ENCODE measurements at regions of chr20 and their contacts with region 1.

Region 1: DNA sequence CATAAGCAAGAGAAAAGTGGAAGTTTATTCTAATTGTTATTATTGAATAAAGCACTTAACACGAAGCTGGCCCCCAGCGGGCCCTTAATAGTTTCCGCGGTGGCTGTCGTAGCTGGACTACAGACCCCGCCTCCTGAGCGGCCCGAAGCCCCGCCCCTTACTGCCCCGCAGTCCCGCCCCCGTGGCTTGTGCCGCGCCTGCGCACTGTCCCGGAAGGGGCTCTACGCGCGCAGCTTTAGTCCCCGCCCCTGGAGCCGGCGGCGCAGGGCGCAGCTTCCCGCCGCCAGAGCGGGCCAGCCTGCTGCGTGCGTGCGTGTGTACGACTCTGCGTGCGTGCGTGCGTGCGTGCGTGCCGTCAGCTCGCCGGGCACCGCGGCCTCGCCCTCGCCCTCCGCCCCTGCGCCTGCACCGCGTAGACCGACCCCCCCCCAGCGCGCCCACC is at the start of gene VAPB:
- DNase-seq: peak; percentile 93 to 99 (median 96)
- ATAC-seq: peak; percentile 95
- H3K4me3 ChIP-seq: peak within 1 kb of the TSS; percentile 81
- H3K4me3 Mint-ChIP-seq: peak within 1 kb of the TSS; percentile 96
- H3K27ac ChIP-seq: peak within 1 kb of the TSS; percentile 94 to 98
- H3K27ac Mint-ChIP-seq: peak within 1 kb of the TSS; percentile 92
- H3K4me1 ChIP-seq: peaks cover 31% of the 10 kb centered on the region
- H3K4me1 Mint-ChIP-seq: peaks cover 43% of the 10 kb centered on the region
- H3K27me3 ChIP-seq: peaks cover 0 to 4% of the 10 kb centered on the region in 2 experiments
- H3K27me3 Mint-ChIP-seq: no peaks in the 10 kb centered on the region
- CTCF ChIP-seq: no peak
- total RNA-seq, gene VAPB: 25.2 to 29.4 TPM

Region 2: GRCh38 chr20:56392282-56393137 is 1996.4 kb before region 1 on chr20 and contains the start of gene CSTF1:
- CTCF ChIA-PET with region 1: no interaction called
- POLR2A ChIA-PET with region 1: no interaction called
- intact Hi-C with region 1: loop called in 1 of 2 experiments (anchors 10 kb)
- DNase-seq: peak; percentile 98 to 100 (median 99)
- ATAC-seq: peak; percentile 83
- H3K4me3 ChIP-seq: peak within 1 kb of the TSS; percentile 88
- H3K4me3 Mint-ChIP-seq: no peak within 1 kb of the TSS
- H3K27ac ChIP-seq: peak within 1 kb of the TSS; percentile 89 to 93
- H3K27ac Mint-ChIP-seq: no peak within 1 kb of the TSS
- H3K4me1 ChIP-seq: peaks cover 24% of the 10 kb centered on the region
- H3K4me1 Mint-ChIP-seq: peaks cover 28% of the 10 kb centered on the region
- H3K27me3 ChIP-seq: no peaks in the 10 kb centered on the region
- H3K27me3 Mint-ChIP-seq: no peaks in the 10 kb centered on the region
- CTCF ChIP-seq: no peak
- total RNA-seq, gene CSTF1: 20.7 to 21.8 TPM

Region 3: GRCh38 chr20:57718490-57719271 is 670.2 kb before region 1 on chr20:
- CTCF ChIA-PET with region 1: no interaction called
- POLR2A ChIA-PET with region 1: no interaction called
- intact Hi-C with region 1: loop called (anchors 5 to 10 kb)
- DNase-seq: peak; percentile 74 to 97 (median 86)
- ATAC-seq: peak; percentile 97
- H3K4me3 ChIP-seq: peak overlapping the region; percentile 52
- H3K4me3 Mint-ChIP-seq: peak overlapping the region; percentile 69
- H3K27ac ChIP-seq: no peak overlapping the region
- H3K27ac Mint-ChIP-seq: peak overlapping the region; percentile 75
- H3K4me1 ChIP-seq: peaks cover 13% of the 10 kb centered on the region
- H3K4me1 Mint-ChIP-seq: peaks cover 16% of the 10 kb centered on the region
- H3K27me3 ChIP-seq: peaks cover 0 to 2% of the 10 kb centered on the region in 2 experiments
- H3K27me3 Mint-ChIP-seq: no peaks in the 10 kb centered on the region
- CTCF ChIP-seq: no peak

Region 4: GRCh38 chr20:58402827-58403226 is 13.9 kb after region 1 on chr20:
- CTCF ChIA-PET with region 1: interaction called, 3 read pairs
- POLR2A ChIA-PET with region 1: interaction called, 20 read pairs
- intact Hi-C with region 1: loop called in 1 of 2 experiments (anchors 2 kb)
- DNase-seq: no peak
- ATAC-seq: no peak
- H3K4me3 ChIP-seq: no peak overlapping the region
- H3K4me3 Mint-ChIP-seq: no peak overlapping the region
- H3K27ac ChIP-seq: no peak overlapping the region
- H3K27ac Mint-ChIP-seq: no peak overlapping the region
- H3K4me1 ChIP-seq: peaks cover 34% of the 10 kb centered on the region
- H3K4me1 Mint-ChIP-seq: peaks cover 18% of the 10 kb centered on the region
- H3K27me3 ChIP-seq: no peaks in the 10 kb centered on the region
- H3K27me3 Mint-ChIP-seq: no peaks in the 10 kb centered on the region
- CTCF ChIP-seq: no peak

Region 5: DNA sequence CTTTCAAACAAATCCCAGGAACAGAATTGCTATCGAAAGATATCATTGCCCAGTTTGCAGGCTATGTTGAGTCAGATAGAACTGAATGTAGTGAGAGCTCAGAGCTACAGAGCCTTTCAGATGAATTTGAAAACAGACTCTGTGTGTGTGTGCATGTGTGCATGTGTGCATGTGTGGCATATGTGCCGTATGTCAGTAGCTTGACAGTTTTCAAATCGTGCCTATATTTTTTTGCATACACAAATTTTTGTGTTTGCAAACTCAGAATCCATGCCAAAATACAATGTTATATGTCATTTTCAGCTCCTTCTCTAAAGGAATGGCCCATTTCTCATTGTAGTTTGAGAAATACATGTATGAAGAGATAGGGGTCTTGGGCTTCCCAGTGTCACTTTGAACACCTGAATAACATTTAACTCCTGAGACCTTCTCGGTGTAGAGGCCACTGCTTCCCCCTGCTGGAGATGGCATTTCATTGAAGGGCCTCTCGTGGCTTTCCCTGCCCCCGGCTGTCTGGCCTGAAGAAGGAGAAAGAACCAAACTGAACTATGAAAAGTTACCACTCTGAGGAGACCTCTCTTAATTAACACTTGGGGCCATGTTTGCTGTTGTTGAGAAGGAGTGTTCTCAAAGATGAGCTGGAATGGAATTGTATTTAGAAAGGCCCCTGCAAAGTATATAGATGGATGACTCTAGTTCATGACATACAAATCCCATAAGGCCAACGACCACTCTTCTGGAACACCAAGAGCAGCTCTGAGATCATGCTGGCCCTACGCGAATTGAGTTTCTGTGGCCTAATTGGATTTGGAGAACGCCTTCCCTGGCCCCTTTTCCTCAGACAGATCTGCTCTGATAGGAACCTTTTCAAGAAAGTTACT is 58.8 kb after region 1 on chr20:
- CTCF ChIA-PET with region 1: interaction called, 3 read pairs
- POLR2A ChIA-PET with region 1: no interaction called
- intact Hi-C with region 1: loop called in 1 of 2 experiments (anchors 10 kb)
- DNase-seq: peak; percentile 33 to 72 (median 49)
- ATAC-seq: peak; percentile 90
- H3K4me3 ChIP-seq: no peak overlapping the region
- H3K4me3 Mint-ChIP-seq: no peak overlapping the region
- H3K27ac ChIP-seq: no peak overlapping the region
- H3K27ac Mint-ChIP-seq: no peak overlapping the region
- H3K4me1 ChIP-seq: no peaks in the 10 kb centered on the region
- H3K4me1 Mint-ChIP-seq: no peaks in the 10 kb centered on the region
- H3K27me3 ChIP-seq: no peaks in the 10 kb centered on the region
- H3K27me3 Mint-ChIP-seq: no peaks in the 10 kb centered on the region
- CTCF ChIP-seq: peak; percentile 67

Region 6: GRCh38 chr20:58980700-58981627 is 592.1 kb after region 1 on chr20 and contains the start of gene NELFCD:
- CTCF ChIA-PET with region 1: no interaction called
- POLR2A ChIA-PET with region 1: interaction called, 4 read pairs
- intact Hi-C with region 1: loop called in 1 of 2 experiments (anchors 5 kb)
- DNase-seq: peak; percentile 79 to 95 (median 88)
- ATAC-seq: peak; percentile 92
- H3K4me3 ChIP-seq: peak within 1 kb of the TSS; percentile 82
- H3K4me3 Mint-ChIP-seq: peak within 1 kb of the TSS; percentile 92
- H3K27ac ChIP-seq: peak within 1 kb of the TSS; percentile 41 to 52
- H3K27ac Mint-ChIP-seq: peak within 1 kb of the TSS; percentile 87
- H3K4me1 ChIP-seq: peaks cover 42% of the 10 kb centered on the region
- H3K4me1 Mint-ChIP-seq: peaks cover 43% of the 10 kb centered on the region
- H3K27me3 ChIP-seq: no peaks in the 10 kb centered on the region
- H3K27me3 Mint-ChIP-seq: no peaks in the 10 kb centered on the region
- CTCF ChIP-seq: no peak
- total RNA-seq, gene NELFCD: 95.7 to 97.0 TPM